Activated naive CD4-positive, alpha-beta T cell treated with anti-CD3 and anti-CD28 coated beads, Interleukin-2, amount 10 ng/mL, durations not matched to agents 7 days and 5 days (primary cell): ENCODE measurements at regions of chr2 and their contacts with region 1.

Region 1: DNA sequence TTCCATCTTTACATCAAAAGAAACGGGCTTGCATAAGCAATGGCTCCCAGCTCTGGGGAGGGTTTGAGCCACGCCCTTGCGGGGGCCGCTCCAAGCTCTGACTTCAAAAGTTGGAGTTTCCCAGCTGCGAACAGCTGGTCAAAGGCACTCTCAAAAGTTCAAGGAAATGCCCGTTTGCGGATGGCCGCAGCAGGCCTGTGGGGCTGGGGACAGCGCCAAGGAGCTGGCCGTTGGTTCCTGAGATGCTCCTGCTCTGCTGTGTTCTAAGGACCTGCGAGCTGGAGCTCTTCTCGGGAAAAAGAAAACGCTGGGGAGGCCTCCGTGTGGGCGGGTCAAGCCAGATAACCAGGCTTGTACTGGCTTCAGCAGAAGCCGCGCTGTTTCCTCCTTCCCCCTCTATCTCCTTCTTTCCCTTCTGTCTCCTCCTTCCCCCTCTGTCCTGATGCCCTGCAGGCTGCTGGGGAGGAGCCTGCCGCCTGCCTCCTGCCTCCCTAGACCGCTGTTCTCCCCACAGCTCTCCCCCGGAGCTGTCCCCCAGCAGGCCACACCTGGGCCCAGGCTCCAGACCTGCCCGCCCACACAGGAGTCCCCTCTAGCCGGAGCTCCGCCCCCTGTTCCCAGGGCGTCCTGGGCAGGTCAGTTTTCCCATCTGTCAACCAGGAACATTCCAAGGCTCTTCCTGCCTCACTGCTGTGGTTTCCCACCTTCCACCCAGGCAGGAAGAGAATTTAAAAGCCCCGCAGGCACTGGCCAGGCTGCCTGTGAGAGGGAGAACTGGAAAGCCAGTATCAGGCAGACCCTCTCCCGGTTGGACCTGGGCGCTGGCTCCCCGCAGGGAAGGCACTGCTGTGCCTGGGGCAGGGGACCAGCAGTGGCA is 14.1 kb downstream of the KLF11 start:
- DNase-seq: no peak
- H3K4me3 Mint-ChIP-seq: no peak overlapping the region
- H3K27ac Mint-ChIP-seq: no peak overlapping the region
- H3K4me1 Mint-ChIP-seq: peaks cover 6% of the 10 kb centered on the region
- H3K27me3 Mint-ChIP-seq: peaks cover 60% of the 10 kb centered on the region

Region 2: GRCh38 chr2:10019174-10019573 is 38.3 kb before region 1 on chr2:
- CTCF ChIA-PET with region 1: no interaction called
- DNase-seq: no peak
- H3K4me3 Mint-ChIP-seq: no peak overlapping the region
- H3K27ac Mint-ChIP-seq: no peak overlapping the region
- H3K4me1 Mint-ChIP-seq: no peaks in the 10 kb centered on the region
- H3K27me3 Mint-ChIP-seq: peaks cover 45% of the 10 kb centered on the region

Region 3: DNA sequence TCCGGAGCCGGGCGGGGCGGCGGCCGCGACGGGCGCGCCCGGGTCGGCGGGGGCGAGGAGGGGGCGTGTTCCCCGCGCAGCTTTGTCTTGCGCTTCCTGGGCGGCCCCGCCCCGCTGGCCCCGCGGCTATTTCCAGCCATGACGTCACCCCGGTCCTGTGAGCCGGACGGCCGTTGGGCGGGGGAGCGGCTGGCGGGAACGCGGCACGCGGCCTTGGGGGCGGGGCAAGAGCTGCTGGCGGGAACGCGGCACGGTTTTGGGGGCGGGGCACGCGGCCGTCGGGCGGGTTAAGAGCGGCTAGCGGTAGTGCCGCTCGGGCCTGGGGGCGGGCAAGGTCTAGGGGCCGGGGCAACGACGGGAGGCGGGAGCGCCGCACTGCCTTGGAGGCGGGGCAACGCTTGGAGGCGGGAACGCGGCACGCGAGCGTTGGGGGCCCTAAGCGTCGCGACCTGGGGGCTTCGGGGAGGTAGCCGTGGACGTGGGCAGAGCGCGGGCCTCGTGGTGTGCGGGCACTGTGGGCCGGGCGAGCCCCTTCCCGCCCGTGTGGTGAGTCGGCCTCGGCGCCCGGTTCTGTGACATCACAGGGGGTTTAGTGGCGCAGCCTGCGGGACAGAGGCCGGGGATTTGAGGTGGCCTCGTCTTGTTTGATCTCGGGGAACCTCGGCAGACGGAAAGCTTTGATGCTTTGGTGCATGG is 13.4 kb before region 1 on chr2:
- CTCF ChIA-PET with region 1: interaction called, 11 read pairs
- DNase-seq: peak; percentile 92
- H3K4me3 Mint-ChIP-seq: peak overlapping the region; percentile 62
- H3K27ac Mint-ChIP-seq: peak overlapping the region; percentile 89
- H3K4me1 Mint-ChIP-seq: peaks cover 34% of the 10 kb centered on the region
- H3K27me3 Mint-ChIP-seq: peaks cover 64% of the 10 kb centered on the region